Naive thymus-derived CD4-positive, alpha-beta T cell (primary cell): ENCODE measurements at regions of chr3 and their contacts with region 1.

Region 1: GRCh38 chr3:121545574-121546455 is at the start of gene POLQ:
- DNase-seq: peak; percentile 64 to 89 (median 82)
- ATAC-seq: peak; percentile 99
- H3K4me3 ChIP-seq: peak within 1 kb of the TSS; percentile 81
- H3K4me3 Mint-ChIP-seq: peak within 1 kb of the TSS; percentile 87 to 95 (median 92)
- H3K27ac ChIP-seq: peak within 1 kb of the TSS; percentile 70
- H3K27ac Mint-ChIP-seq: peak within 1 kb of the TSS; percentile 84 to 97 (median 94)
- H3K4me1 ChIP-seq: peaks cover 0 to 5% of the 10 kb centered on the region in 2 donors
- H3K4me1 Mint-ChIP-seq: peaks cover 6 to 38% (median 10%) of the 10 kb centered on the region in 7 donors
- H3K27me3 ChIP-seq: no peaks in the 10 kb centered on the region
- H3K27me3 Mint-ChIP-seq: no peaks in the 10 kb centered on the region
- total RNA-seq, gene POLQ: 0.17 to 26.6 (median 0.38) TPM

Region 2: DNA sequence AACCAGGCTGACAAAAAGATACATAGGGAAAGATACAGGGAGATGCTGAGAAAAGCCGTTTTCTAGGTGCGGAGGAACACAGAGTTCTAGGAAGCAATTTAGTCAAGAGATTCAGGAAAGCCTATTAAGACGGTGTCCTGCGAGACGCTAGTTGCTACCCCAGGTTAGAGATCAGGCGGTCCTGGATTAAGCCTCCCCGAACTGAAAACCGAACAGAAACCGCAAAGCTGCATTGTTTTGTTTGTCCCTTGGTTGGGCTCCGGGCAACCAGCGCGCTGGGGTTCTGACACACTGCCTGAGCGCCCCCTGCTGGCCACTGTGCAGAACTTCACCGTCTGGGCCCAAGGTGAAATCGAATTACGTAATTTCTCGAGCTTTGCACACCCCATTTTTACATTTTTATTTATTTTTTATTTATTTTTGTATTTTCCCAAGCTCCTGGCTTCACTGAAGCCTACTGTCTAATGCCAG is 987.0 kb before region 1 on chr3:
- CTCF ChIA-PET with region 1: no interaction called
- POLR2A ChIA-PET with region 1: no interaction called
- intact Hi-C with region 1: loop called in 1 of 2 experiments (anchors 10 kb)
- DNase-seq: peak; percentile 80 to 89 (median 88)
- ATAC-seq: peak; percentile 97
- H3K4me3 ChIP-seq: peak overlapping the region; percentile 61
- H3K4me3 Mint-ChIP-seq: peak overlapping the region; percentile 75 to 87 (median 82)
- H3K27ac ChIP-seq: peak overlapping the region; percentile 58
- H3K27ac Mint-ChIP-seq: peak overlapping the region; percentile 54 to 91 (median 83)
- H3K4me1 ChIP-seq: peaks cover 6% of the 10 kb centered on the region in 2 donors
- H3K4me1 Mint-ChIP-seq: peaks cover 6 to 23% (median 16%) of the 10 kb centered on the region in 7 donors
- H3K27me3 ChIP-seq: peaks cover 0 to 4% of the 10 kb centered on the region in 2 donors
- H3K27me3 Mint-ChIP-seq: peaks cover 0 to 13% (median 7%) of the 10 kb centered on the region in 5 donors

Region 3: DNA sequence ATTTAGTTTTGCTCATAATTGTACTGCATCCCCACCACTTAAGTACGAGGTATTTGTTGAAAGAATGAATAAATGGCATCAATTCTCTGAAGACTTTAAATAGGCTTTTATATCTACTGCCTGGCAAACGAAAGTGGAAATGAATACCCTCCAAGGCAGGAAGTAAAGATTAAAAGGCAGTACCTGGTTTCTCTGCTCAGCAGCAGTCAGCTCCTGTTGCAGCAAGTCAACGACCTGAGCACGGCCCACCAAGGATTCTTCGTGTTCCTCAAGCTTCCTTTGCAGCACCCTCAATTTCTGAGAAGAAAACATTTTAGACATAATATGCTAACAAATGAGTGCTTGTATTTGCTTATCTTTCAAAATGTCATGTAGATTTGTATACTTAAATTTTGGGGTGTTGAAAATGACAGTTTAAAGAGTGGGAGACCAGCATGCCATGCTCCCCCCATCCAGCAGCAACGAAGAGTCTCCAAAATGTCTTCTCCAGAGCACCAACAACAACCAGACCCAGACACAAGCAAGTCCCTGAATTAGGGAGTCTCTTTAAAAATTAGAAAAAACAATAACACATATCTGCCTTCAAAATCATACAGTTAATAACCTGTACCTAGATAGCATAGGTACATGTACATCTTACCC is 172.5 kb after region 1 on chr3:
- CTCF ChIA-PET with region 1: no interaction called
- POLR2A ChIA-PET with region 1: no interaction called
- intact Hi-C with region 1: loop called in 1 of 2 experiments (anchors 1 kb)
- DNase-seq: peak in 7 of 9 donors; percentile 37 to 70 (median 58)
- ATAC-seq: peak; percentile 88
- H3K4me3 ChIP-seq: peak overlapping the region; percentile 15
- H3K4me3 Mint-ChIP-seq: peak overlapping the region; percentile 3 to 80 (median 48)
- H3K27ac ChIP-seq: peak overlapping the region; percentile 47
- H3K27ac Mint-ChIP-seq: peak overlapping the region; percentile 63 to 97 (median 90)
- H3K4me1 ChIP-seq: peaks cover 0 to 7% of the 10 kb centered on the region in 2 donors
- H3K4me1 Mint-ChIP-seq: peaks cover 13 to 37% (median 22%) of the 10 kb centered on the region in 7 donors
- H3K27me3 ChIP-seq: no peaks in the 10 kb centered on the region
- H3K27me3 Mint-ChIP-seq: no peaks in the 10 kb centered on the region

Region 4: DNA sequence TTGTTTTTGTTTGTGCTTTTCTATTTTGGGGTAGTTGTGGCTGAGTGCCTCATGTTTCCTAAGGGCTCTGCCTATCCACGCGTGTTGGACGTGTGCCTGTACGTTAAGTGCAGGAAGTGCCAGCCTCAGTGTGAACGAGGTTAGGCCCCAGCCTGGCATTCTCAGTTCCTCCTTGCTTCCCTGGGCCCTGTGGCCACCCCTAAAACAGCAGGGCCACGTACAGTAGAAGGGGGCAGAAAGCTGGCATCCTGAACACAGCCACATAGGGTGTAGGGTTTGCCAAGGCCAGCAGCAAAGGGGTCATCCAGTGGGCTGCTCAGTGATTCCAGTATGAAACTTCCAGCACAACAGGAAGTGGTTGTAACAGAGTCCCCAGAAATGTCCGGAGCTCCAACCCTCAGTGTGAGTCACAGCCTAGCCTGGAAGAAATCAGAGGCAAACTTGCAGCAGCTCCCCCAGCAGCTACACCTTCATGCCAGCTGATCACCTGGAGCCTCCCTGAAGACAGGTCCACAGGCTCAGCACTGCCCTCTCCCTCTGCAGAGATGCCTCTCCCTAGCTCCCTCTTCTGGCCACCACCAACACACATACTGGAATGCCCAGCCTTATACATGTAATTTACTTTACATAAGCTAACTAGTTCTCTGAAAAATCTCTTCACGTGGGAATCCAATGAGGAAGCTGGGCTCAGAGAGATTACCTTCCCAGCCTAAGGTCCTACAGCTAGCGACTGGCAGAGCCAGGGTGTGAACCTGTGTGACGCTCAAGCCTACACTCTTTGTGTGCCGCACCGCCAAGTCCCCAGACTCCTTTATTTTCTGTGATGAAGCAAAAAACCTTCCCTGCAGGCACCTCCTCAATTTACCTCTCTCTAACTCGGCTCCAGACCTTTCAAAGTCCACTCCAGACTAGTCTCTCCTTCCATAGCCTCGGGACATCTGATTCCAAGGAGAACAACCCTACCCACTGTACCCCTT is 449.6 kb after region 1 on chr3:
- CTCF ChIA-PET with region 1: interaction called, 4 read pairs
- POLR2A ChIA-PET with region 1: no interaction called
- intact Hi-C with region 1: loop called (anchors 1 kb)
- DNase-seq: peak in 7 of 9 donors; percentile 9 to 40 (median 18)
- ATAC-seq: peak; percentile 71
- H3K4me3 ChIP-seq: no peak overlapping the region
- H3K4me3 Mint-ChIP-seq: no peak overlapping the region
- H3K27ac ChIP-seq: no peak overlapping the region
- H3K27ac Mint-ChIP-seq: peak overlapping the region in 2 of 9 donors; percentile 7 to 54
- H3K4me1 ChIP-seq: no peaks in the 10 kb centered on the region
- H3K4me1 Mint-ChIP-seq: peaks cover 4 to 26% (median 7%) of the 10 kb centered on the region in 7 donors
- H3K27me3 ChIP-seq: no peaks in the 10 kb centered on the region
- H3K27me3 Mint-ChIP-seq: peaks cover 0 to 3% (median 0%) of the 10 kb centered on the region in 5 donors

Region 5: GRCh38 chr3:122299872-122300460 is 754.2 kb after region 1 on chr3:
- CTCF ChIA-PET with region 1: no interaction called
- POLR2A ChIA-PET with region 1: no interaction called
- intact Hi-C with region 1: loop called (anchors 1 kb)
- DNase-seq: peak in 7 of 9 donors; percentile 11 to 61 (median 45)
- ATAC-seq: peak; percentile 68
- H3K4me3 ChIP-seq: no peak overlapping the region
- H3K4me3 Mint-ChIP-seq: no peak overlapping the region
- H3K27ac ChIP-seq: no peak overlapping the region
- H3K27ac Mint-ChIP-seq: peak overlapping the region in 1 of 9 donors; percentile 49
- H3K4me1 ChIP-seq: peaks cover 0 to 5% of the 10 kb centered on the region in 2 donors
- H3K4me1 Mint-ChIP-seq: peaks cover 0 to 11% (median 4%) of the 10 kb centered on the region in 7 donors
- H3K27me3 ChIP-seq: no peaks in the 10 kb centered on the region
- H3K27me3 Mint-ChIP-seq: peaks cover 0 to 4% (median 2%) of the 10 kb centered on the region in 5 donors

Region 6: GRCh38 chr3:122564155-122564912 is 1018.5 kb after region 1 on chr3 and contains the starts of genes DTX3L and PARP9:
- CTCF ChIA-PET with region 1: no interaction called
- POLR2A ChIA-PET with region 1: no interaction called
- intact Hi-C with region 1: loop called (anchors 2 kb)
- DNase-seq: peak; percentile 50 to 82 (median 77)
- ATAC-seq: peak; percentile 95
- H3K4me3 ChIP-seq: peak within 1 kb of the TSS; percentile 75
- H3K4me3 Mint-ChIP-seq: peak within 1 kb of the TSS; percentile 88 to 100 (median 98)
- H3K27ac ChIP-seq: peak within 1 kb of the TSS; percentile 98
- H3K27ac Mint-ChIP-seq: peak within 1 kb of the TSS; percentile 97 to 99 (median 98)
- H3K4me1 ChIP-seq: peaks cover 34 to 45% of the 10 kb centered on the region in 2 donors
- H3K4me1 Mint-ChIP-seq: peaks cover 58 to 91% (median 79%) of the 10 kb centered on the region in 7 donors
- H3K27me3 ChIP-seq: no peaks in the 10 kb centered on the region
- H3K27me3 Mint-ChIP-seq: no peaks in the 10 kb centered on the region
- total RNA-seq, gene DTX3L: 28.6 to 164 (median 35.8) TPM
- total RNA-seq, gene PARP9: 17.6 to 165 (median 24.4) TPM

Region 7: GRCh38 chr3:123201566-123202427 is 1656.0 kb after region 1 on chr3 and contains the start of gene SEC22A:
- CTCF ChIA-PET with region 1: interaction called, 3 read pairs
- POLR2A ChIA-PET with region 1: no interaction called
- intact Hi-C with region 1: loop called (anchors 1 to 5 kb)
- DNase-seq: peak; percentile 89 to 99 (median 97)
- ATAC-seq: peak; percentile 97
- H3K4me3 ChIP-seq: peak within 1 kb of the TSS; percentile 90
- H3K4me3 Mint-ChIP-seq: peak within 1 kb of the TSS; percentile 82 to 98 (median 92)
- H3K27ac ChIP-seq: peak within 1 kb of the TSS; percentile 99
- H3K27ac Mint-ChIP-seq: peak within 1 kb of the TSS; percentile 97 to 100 (median 99)
- H3K4me1 ChIP-seq: peaks cover 12% of the 10 kb centered on the region in 2 donors
- H3K4me1 Mint-ChIP-seq: peaks cover 13 to 41% (median 31%) of the 10 kb centered on the region in 7 donors
- H3K27me3 ChIP-seq: no peaks in the 10 kb centered on the region
- H3K27me3 Mint-ChIP-seq: peaks cover 0 to 9% (median 2%) of the 10 kb centered on the region in 5 donors
- total RNA-seq, gene SEC22A: 15.0 to 20.1 (median 17.1) TPM